ENCODE measurements at regions of chr16 and their contacts with region 1.

Region 1: GRCh38 chr16:23182460-23183309 is at the start of gene SCNN1G:
- DNase-seq: peak; percentile 33 to 70
- H3K4me3 ChIP-seq: peak within 1 kb of the TSS; percentile 17 to 44
- H3K27ac ChIP-seq: no peak within 1 kb of the TSS
- H3K4me1 ChIP-seq: peaks cover 0 to 15% (median 12%) of the 10 kb centered on the region in 4 donors
- H3K27me3 ChIP-seq: peaks cover 0 to 73% of the 10 kb centered on the region in 2 donors
- CTCF ChIP-seq: peak; percentile 90 to 98

Region 2: GRCh38 chr16:22989598-22989997 is 193.1 kb before region 1 on chr16:
- intact Hi-C with region 1: loop called (anchors 10 kb)
- DNase-seq: no peak
- H3K4me3 ChIP-seq: no peak overlapping the region
- H3K27ac ChIP-seq: no peak overlapping the region
- H3K4me1 ChIP-seq: no peaks in the 10 kb centered on the region
- H3K27me3 ChIP-seq: peaks cover 0 to 3% of the 10 kb centered on the region in 2 donors
- CTCF ChIP-seq: no peak

Region 3: GRCh38 chr16:23232806-23233205 is 50.1 kb after region 1 on chr16:
- intact Hi-C with region 1: no loop called
- DNase-seq: no peak
- H3K4me3 ChIP-seq: no peak overlapping the region
- H3K27ac ChIP-seq: no peak overlapping the region
- H3K4me1 ChIP-seq: no peaks in the 10 kb centered on the region
- H3K27me3 ChIP-seq: peaks cover 0 to 6% of the 10 kb centered on the region in 2 donors
- CTCF ChIP-seq: no peak

Region 4: DNA sequence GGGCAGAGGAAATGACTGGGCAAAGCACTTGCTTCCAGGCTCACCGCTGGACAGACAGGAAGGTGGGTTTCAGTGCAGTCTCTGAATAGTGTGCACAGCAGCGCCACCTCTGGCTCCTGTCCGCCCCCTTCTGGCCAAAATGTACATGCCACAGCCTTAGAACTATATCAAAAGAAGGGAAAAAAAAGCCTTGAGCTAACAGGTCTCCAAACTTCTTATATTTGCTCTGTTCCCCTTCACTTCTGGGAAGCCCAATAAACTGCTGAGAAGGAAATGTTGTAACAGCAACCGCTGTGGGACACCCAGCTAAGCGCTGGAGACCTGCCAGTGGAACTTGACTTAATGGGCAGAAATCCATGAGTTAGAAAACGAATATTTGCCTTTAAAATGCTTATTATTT is 252.8 kb after region 1 on chr16:
- intact Hi-C with region 1: loop called (anchors 2 kb)
- DNase-seq: peak in 1 of 2 donors; percentile 39
- H3K4me3 ChIP-seq: no peak overlapping the region
- H3K27ac ChIP-seq: no peak overlapping the region
- H3K4me1 ChIP-seq: no peaks in the 10 kb centered on the region
- H3K27me3 ChIP-seq: no peaks in the 10 kb centered on the region
- CTCF ChIP-seq: peak; percentile 59 to 63

Measured in tibial artery (tissue), 4 donors.